ENCODE measurements at regions of chr10 and their contacts with region 1.

Region 1: GRCh38 chr10:29392376-29393021 is 103.6 kb downstream of the LYZL1 start:
- DNase-seq: no peak
- H3K4me3 ChIP-seq: no peak overlapping the region
- H3K27me3 ChIP-seq: peaks cover 24% of the 10 kb centered on the region
- CTCF ChIP-seq: peak; percentile 85

Region 2: DNA sequence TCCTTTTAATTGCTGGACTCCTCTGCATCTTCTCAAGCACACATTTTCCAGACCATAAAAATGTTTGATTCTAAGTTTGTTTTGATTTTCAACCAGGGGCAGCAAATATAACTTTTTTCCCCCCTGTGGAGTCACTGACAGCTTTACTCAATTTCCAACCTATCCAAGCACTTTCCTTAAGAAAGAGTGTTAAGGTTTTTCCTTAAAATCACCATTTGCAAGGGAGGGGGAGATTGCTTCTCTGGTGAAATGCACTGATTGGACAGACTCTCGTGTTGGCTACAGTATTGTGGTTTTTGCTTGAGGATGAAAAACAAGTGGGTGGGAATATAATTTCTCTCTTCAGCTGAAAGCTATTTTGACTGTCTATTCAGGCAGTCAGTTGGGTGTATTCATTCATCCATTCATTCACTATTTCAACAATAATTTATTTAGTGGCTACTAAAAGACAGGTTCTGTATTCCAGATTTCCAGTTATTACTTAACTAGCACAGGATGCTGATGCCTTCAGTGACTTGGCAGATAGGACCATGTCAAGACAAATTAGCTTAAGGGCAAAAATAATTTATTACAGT is 568.9 kb before region 1 on chr10:
- CTCF ChIA-PET with region 1: no interaction called
- POLR2A ChIA-PET with region 1: no interaction called
- DNase-seq: no peak
- H3K4me3 ChIP-seq: no peak overlapping the region
- H3K27me3 ChIP-seq: peaks cover 12% of the 10 kb centered on the region
- CTCF ChIP-seq: no peak

Region 3: DNA sequence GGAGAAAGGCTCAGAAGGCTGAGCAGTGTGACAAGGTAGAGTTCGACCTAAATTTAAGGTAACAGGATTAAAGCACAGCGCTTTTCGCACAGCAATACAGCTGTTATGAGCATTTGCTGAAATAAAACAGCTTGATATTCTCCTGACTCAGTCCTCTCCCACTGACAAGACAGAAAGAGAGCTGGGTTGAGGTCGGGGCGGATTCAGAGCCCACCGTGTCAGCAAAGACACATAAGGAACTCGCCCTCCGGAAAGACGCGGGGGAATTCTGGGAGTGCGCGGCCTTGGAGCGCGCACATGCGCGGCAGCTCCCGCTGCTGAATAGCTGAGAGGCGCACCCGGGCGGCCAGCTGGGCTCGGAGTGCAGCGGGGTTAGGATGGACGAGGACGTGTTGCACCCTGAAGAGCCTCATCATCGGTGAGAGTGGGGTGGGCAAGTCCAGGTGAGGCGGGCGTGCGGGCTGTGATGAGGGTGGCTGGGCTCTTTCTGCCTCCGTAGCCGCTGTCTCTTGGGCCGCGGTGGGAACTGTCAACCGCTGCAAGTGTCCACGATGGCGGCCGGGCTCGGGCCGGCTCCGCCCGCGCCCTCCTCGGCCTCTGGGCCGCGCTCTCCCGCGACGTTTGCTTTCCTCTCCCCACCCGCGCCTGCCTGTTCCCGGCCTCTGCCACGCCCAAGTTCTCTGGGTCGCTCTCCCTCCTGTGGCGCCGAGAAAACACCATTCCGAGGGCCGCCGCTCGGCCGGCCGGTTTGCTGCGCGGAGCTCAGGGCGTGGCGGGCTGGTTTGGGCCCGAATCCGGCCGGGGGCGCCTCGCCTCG is 16.9 kb after region 1 on chr10:
- CTCF ChIA-PET with region 1: interaction called, 31 read pairs
- POLR2A ChIA-PET with region 1: no interaction called
- DNase-seq: no peak
- H3K4me3 ChIP-seq: peak overlapping the region; percentile 72
- H3K27me3 ChIP-seq: no peaks in the 10 kb centered on the region
- CTCF ChIP-seq: 0 out of 2 replicates have a peak, but pooled peaks have one; percentile 3

Region 4: GRCh38 chr10:29482591-29483431 is 90.3 kb after region 1 on chr10:
- CTCF ChIA-PET with region 1: interaction called, 10 read pairs
- POLR2A ChIA-PET with region 1: no interaction called
- DNase-seq: no peak
- H3K4me3 ChIP-seq: no peak overlapping the region
- H3K27me3 ChIP-seq: no peaks in the 10 kb centered on the region
- CTCF ChIP-seq: no peak

Measured in BJ (cell line).